HCT116 (cell line): ENCODE measurements at regions of chr4 and their contacts with region 1.

Region 1: DNA sequence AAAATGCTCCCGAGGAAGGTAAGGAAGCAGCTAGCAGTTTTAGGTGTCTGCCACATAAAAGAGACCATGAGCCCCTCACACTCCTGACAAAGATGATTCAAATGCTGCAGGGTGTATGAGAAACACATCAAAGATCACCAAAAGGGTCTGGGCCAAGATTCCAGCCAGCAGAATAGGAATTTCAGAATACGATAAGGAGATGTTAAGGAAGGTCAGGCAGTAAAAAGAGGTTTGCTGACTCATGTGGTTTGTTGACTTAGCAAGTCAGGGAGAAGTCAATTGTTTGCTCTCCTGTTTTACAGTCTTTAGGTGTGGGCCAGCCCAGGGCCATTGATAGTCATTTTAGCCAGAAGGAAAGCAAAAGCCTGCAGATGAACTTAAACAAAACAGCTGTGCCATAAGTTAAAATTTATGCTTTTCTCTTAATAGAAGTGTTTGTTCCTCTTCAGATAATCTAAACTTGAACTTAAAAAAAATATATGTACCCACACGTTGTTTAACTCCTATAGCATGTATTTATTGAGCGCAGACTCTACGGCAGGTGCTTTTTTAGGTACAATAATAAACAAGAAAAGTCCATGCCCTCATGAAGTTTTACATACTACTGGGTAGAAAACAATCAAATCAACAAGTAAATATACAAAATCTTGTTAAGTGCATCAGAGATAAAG is 115.6 kb downstream of the CAMK2D start:
- DNase-seq: peak; percentile 83
- ATAC-seq: peak; percentile 95
- H3K4me3 ChIP-seq: no peak overlapping the region
- H3K27ac ChIP-seq: peak overlapping the region; percentile 37
- H3K4me1 ChIP-seq: peaks cover 24 to 33% of the 10 kb centered on the region in 2 experiments
- H3K27me3 ChIP-seq: no peaks in the 10 kb centered on the region
- CTCF ChIP-seq: no peak
- POLR2A ChIP-seq: no peak
- RAD21 ChIP-seq: peak; percentile 25

Region 2: DNA sequence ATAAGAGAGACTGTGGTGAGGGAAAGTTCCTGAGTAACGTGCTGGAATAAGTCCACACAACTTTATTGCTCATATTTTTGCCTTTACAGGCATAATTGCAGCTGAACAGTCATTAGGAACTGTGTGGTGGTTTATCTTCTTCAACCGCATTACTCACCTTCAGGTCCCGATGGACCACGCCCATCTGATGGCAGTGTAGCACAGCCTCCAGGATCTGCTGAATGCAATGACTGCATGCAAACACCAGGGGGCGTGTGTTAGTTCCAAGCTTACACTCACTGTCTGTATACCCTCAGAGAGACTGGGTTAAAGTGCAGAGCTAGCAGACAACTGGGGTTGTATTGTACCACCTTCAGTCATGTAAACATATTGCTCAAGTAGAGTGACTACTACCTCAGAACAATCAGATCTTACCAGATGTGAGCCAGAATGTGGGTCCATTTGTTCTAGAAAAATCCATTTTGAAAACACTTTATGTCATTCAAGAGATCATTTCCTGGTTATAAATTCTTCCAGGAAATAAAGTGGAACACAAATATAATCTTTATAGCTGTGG is 98.3 kb before region 1 on chr4:
- CTCF ChIA-PET with region 1: no interaction called
- POLR2A ChIA-PET with region 1: no interaction called
- RAD21 ChIA-PET with region 1: no interaction called
- intact Hi-C with region 1: loop called (anchors 10 kb)
- DNase-seq: peak; percentile 95
- ATAC-seq: peak; percentile 100
- H3K4me3 ChIP-seq: no peak overlapping the region
- H3K27ac ChIP-seq: no peak overlapping the region
- H3K4me1 ChIP-seq: peaks cover 6 to 13% of the 10 kb centered on the region in 2 experiments; a peak in 3 of 4 replicates
- H3K27me3 ChIP-seq: no peaks in the 10 kb centered on the region
- CTCF ChIP-seq: peak; percentile 81 to 98 (median 96)
- POLR2A ChIP-seq: no peak
- RAD21 ChIP-seq: peak; percentile 85